OCI-LY7 (cell line): ENCODE measurements at regions of chr4 and their contacts with region 1.

Region 1: GRCh38 chr4:21879187-21879586 is 69.4 kb downstream of the KCNIP4 start:
- DNase-seq: no peak
- H3K4me3 ChIP-seq: no peak overlapping the region
- H3K27ac ChIP-seq: no peak overlapping the region
- H3K4me1 ChIP-seq: no peaks in the 10 kb centered on the region
- CTCF ChIP-seq: no peak

Region 2: GRCh38 chr4:22196551-22196950 is 317.4 kb after region 1 on chr4:
- CTCF ChIA-PET with region 1: no interaction called
- POLR2A ChIA-PET with region 1: no interaction called
- intact Hi-C with region 1: loop called (anchors 5 kb)
- DNase-seq: no peak
- H3K4me3 ChIP-seq: no peak overlapping the region
- H3K27ac ChIP-seq: no peak overlapping the region
- H3K4me1 ChIP-seq: no peaks in the 10 kb centered on the region
- CTCF ChIP-seq: no peak